ENCODE measurements at regions of chr5 and their contacts with region 1.

Region 1: GRCh38 chr5:142915813-142916424 is 145.7 kb downstream of the ARHGAP26 start:
- DNase-seq: peak; percentile 66
- H3K4me3 Mint-ChIP-seq: no peak overlapping the region
- H3K27ac Mint-ChIP-seq: peak overlapping the region; percentile 10
- H3K4me1 Mint-ChIP-seq: peaks cover 58% of the 10 kb centered on the region
- H3K27me3 Mint-ChIP-seq: no peaks in the 10 kb centered on the region
- CTCF ChIP-seq: peak; percentile 64

Region 2: DNA sequence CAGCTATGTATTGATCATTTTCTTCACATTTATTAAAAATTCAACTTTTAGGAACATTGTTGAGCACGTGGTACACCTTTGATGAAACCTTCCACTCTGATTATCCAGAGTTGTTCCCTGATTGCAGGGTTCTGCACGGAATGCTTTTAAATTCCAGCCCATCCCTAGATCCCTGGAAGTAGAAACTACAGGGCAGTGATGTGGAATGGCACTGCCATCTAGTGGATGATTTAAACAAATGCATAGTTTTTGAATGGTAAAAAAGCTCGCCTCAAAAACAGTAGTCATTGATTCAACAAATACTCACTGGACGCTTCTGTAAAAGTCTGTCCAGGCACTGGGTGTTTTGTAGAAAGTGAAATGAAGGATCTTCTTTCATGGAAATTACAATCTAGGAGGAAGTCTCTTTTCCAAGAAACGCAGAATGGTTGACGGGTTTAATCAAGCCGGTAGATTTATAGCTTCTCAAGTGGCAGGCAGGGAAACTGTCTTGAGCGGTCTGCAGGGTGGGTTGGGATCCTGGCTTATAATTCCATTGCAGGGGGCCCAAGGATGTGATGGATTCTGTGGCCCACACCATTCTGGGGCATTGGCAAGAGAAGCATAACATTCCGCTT is 27.3 kb before region 1 on chr5:
- CTCF ChIA-PET with region 1: interaction called, 11 read pairs
- intact Hi-C with region 1: no loop called
- DNase-seq: peak; percentile 46
- H3K4me3 Mint-ChIP-seq: no peak overlapping the region
- H3K27ac Mint-ChIP-seq: no peak overlapping the region
- H3K4me1 Mint-ChIP-seq: peaks cover 33% of the 10 kb centered on the region
- H3K27me3 Mint-ChIP-seq: no peaks in the 10 kb centered on the region
- CTCF ChIP-seq: peak; percentile 52

Region 3: DNA sequence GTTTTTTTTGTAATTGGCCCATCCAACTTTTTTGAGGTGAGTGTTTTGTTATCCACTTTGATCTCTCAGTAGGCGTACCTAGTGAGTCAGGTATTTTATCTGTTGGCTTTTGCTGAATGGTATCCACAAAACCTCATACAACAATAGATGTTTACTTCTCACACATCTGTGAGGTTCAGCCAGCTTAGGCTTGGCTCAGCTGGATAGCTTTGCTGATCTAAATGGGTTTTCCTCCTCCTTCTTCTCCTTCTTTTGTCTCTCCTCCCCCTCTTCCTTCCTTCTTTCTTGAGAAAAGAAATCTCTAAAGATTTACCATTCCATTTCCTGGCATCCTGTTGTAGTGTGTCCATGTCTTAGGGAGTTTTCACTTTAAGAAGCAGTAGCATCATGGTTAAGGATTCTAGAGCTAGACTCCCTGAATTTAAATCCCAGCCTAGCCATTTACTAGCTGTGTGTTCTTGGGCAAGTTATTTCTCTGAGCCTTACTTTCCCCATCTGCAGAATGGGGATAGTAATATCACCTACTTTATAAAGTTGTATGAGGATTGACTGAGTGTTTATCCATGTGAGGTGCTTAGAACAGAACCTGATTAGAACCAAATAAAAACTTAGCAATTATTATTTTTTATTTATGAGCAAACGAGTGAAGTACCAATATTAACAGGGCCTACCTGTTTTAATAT is 19.5 kb before region 1 on chr5:
- CTCF ChIA-PET with region 1: no interaction called
- intact Hi-C with region 1: loop called (anchors 2 kb)
- DNase-seq: no peak
- H3K4me3 Mint-ChIP-seq: no peak overlapping the region
- H3K27ac Mint-ChIP-seq: peak overlapping the region; percentile 25
- H3K4me1 Mint-ChIP-seq: peaks cover 59% of the 10 kb centered on the region
- H3K27me3 Mint-ChIP-seq: no peaks in the 10 kb centered on the region
- CTCF ChIP-seq: no peak